Endothelial cell of umbilical vein (primary cell): ENCODE measurements at regions of chr6 and their contacts with region 1.

Region 1: DNA sequence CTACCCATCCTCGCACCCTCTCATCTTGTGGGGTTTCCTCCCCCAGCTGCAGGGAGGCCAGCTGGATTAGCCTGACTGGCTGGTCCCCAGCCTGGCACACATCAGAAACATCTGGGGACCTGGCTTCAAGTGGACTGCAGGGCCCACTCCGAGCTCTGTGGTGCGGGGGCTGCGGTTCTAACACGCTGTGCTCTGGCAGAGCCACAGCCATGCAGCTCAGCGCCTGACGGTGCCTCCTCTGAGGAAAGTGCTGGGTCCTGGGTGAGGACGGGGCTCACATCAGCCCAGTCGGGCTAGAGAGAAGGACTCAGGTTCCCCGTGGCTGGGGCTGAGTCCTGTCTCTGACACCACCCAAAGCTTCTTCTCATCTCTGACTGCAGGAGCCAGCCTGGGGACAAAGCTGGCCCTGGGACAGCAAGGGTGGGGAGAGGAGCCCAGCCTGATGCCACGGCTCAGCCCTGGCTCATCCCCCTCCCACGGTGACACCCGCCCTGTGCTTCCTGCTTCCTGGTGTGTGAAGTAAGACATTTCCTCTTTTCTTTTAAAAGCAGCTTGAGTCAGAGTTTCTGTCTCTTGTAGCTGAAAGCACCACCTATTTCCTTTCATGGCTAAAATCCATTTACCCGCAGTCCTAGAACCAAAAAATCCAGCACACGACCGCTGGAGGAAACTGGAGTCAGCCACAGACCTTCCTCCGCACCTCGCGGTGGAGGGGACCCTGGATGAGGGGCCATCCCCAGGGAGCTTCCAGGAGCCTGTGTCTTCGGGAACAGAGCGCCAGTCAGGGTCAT is 127.4 kb upstream of the AFDN start:
- DNase-seq: peak; percentile 87
- H3K4me3 ChIP-seq: peak overlapping the region in 1 of 3 experiments; percentile 42
- H3K27ac ChIP-seq: peak overlapping the region; percentile 99
- H3K4me1 ChIP-seq: peaks cover 22% of the 10 kb centered on the region
- H3K27me3 ChIP-seq: no peaks in the 10 kb centered on the region
- CTCF ChIP-seq: no peak
- POLR2A ChIP-seq: no peak

Region 2: DNA sequence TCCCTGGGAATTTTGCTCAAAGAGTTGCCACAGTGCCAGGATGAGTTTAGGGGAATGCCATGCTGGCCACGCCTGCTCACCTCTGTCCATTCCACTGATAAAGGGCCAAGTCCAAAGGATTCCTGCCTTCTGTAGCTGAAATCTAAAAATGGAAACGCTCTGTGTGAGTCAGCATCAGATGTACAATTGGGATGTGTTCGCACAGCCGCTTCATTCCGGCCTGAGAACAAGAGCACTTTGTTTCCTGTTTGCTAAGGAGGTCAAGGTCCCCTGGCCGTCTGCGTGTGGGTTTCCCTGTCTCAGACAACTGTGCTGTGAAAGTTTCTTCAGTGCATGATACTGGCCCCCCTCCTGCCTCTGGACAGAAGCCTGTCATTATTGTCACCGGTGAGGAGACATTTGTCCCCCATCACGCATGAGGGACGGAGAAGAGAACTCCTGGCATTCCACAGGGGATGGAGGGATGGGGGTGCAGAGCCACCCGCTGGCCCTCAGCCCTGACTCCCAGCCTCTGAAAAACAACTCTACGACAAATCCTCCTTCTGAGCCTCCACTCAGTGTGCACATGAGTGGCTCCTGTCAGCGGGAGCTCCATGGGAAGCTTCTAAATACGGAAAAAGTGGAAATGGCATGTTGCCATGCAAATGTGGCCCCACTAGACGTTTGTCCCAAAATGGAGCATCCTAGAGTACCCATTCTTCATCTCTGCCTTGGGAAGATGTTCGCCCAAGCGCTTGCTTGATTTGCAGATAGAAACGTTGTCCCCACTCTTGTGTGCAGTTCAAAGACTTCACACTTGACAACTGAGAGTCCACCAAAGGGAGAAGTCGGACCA is 16.1 kb before region 1 on chr6:
- CTCF ChIA-PET with region 1: interaction called, 11 read pairs
- POLR2A ChIA-PET with region 1: no interaction called
- dilution Hi-C with region 1: no loop called
- intact Hi-C with region 1: loop called (anchors 1 kb)
- DNase-seq: peak; percentile 94
- H3K4me3 ChIP-seq: no peak overlapping the region
- H3K27ac ChIP-seq: peak overlapping the region; percentile 76
- H3K4me1 ChIP-seq: peaks cover 24% of the 10 kb centered on the region
- H3K27me3 ChIP-seq: peaks cover 0 to under 1% of the 10 kb centered on the region in 2 experiments
- CTCF ChIP-seq: no peak
- POLR2A ChIP-seq: no peak

Region 3: GRCh38 chr6:168440520-168441433 is 741.4 kb after region 1 on chr6 and contains the start of gene SMOC2:
- CTCF ChIA-PET with region 1: no interaction called
- POLR2A ChIA-PET with region 1: no interaction called
- dilution Hi-C with region 1: no loop called
- intact Hi-C with region 1: no loop called
- DNase-seq: no peak
- H3K4me3 ChIP-seq: no peak within 1 kb of the TSS
- H3K27ac ChIP-seq: no peak within 1 kb of the TSS
- H3K4me1 ChIP-seq: no peaks in the 10 kb centered on the region
- H3K27me3 ChIP-seq: peaks cover 9 to 21% of the 10 kb centered on the region in 2 experiments
- CTCF ChIP-seq: no peak
- POLR2A ChIP-seq: no peak
- total RNA-seq, gene SMOC2: not detected in 2 replicates